Breast epithelium (tissue), 4 donors: ENCODE measurements at regions of chr21 and their contacts with region 1.

Region 1: DNA sequence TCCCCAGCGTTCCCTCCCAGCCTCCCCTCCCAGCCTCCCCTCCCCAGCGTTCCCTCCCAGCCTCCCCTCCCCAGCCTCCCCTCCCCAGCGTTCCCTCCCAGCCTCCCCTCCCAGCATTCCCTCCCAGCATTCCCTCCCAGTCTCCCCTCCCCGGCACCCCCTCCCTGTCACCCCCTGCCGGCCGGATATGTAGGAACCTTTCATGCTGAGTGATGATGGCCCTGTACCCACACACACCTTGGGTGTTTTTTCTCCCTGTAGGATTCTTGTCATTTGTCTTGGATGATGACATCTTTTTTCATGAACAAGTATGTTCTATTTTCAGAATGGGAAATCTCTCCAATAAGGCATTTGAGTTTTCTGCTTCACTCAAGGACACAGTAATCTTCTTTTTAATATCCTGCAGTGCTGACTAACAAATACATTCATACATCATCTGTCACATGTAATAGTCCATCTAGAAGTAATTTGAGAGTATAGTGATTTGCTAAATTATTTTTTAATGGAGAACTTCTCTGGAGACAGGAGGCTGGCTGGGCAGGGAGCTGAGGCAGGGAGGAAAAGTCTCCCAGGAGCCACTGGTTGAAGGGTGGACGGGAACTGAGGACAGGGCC is 19.5 kb downstream of the FTCD start:
- DNase-seq: no peak
- H3K4me3 ChIP-seq: no peak overlapping the region
- H3K27ac ChIP-seq: no peak overlapping the region
- H3K4me1 ChIP-seq: no peaks in the 10 kb centered on the region
- H3K27me3 ChIP-seq: no peaks in the 10 kb centered on the region
- CTCF ChIP-seq: no peak
- POLR2A ChIP-seq: no peak

Region 2: GRCh38 chr21:45578176-45578801 is 557.6 kb before region 1 on chr21:
- intact Hi-C with region 1: no loop called
- DNase-seq: no peak
- H3K4me3 ChIP-seq: no peak overlapping the region
- H3K27ac ChIP-seq: no peak overlapping the region
- H3K4me1 ChIP-seq: no peaks in the 10 kb centered on the region
- H3K27me3 ChIP-seq: peaks cover 0 to 44% of the 10 kb centered on the region in 2 donors
- CTCF ChIP-seq: no peak
- POLR2A ChIP-seq: no peak

Region 3: GRCh38 chr21:46110499-46111192 is 25.2 kb before region 1 on chr21:
- intact Hi-C with region 1: loop called (anchors 1 kb)
- DNase-seq: peak; percentile 32 to 51
- H3K4me3 ChIP-seq: peak overlapping the region in 1 of 3 donors; percentile 19
- H3K27ac ChIP-seq: peak overlapping the region in 1 of 2 donors; percentile 58
- H3K4me1 ChIP-seq: no peaks in the 10 kb centered on the region
- H3K27me3 ChIP-seq: no peaks in the 10 kb centered on the region
- CTCF ChIP-seq: no peak
- POLR2A ChIP-seq: no peak

Region 4: DNA sequence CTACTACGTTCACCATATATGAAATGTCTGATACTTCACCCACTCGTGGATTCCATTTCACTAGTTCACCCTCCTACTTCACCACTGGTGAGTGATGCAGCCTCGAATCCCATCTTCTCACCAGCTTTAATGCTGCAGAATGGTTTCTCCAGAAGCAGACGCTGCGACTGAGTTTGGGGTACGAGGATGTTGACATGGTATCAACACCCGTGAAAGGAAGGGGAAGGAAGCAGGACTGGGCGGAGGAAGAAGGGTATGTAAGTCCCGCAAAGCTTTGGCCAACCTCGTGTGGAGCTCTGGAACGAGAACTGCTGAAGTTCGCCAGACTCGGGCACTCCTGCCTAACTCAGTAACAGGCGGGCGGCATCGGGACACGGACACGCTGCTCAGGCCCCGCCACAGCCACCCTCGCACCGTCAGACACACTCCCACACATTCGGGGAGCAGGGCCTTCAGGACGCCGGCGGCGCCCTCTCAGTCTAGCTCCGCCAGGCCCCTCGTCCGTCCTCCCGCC is 322.0 kb after region 1 on chr21:
- intact Hi-C with region 1: loop called (anchors 5 kb)
- DNase-seq: no peak
- H3K4me3 ChIP-seq: peak overlapping the region; percentile 96
- H3K27ac ChIP-seq: peak overlapping the region; percentile 85 to 88
- H3K4me1 ChIP-seq: peaks cover 0 to 3% of the 10 kb centered on the region in 2 donors
- H3K27me3 ChIP-seq: no peaks in the 10 kb centered on the region
- CTCF ChIP-seq: no peak
- POLR2A ChIP-seq: no peak